GM10248 (cell line): ENCODE measurements at regions of chr11 and their contacts with region 1.

Region 1: DNA sequence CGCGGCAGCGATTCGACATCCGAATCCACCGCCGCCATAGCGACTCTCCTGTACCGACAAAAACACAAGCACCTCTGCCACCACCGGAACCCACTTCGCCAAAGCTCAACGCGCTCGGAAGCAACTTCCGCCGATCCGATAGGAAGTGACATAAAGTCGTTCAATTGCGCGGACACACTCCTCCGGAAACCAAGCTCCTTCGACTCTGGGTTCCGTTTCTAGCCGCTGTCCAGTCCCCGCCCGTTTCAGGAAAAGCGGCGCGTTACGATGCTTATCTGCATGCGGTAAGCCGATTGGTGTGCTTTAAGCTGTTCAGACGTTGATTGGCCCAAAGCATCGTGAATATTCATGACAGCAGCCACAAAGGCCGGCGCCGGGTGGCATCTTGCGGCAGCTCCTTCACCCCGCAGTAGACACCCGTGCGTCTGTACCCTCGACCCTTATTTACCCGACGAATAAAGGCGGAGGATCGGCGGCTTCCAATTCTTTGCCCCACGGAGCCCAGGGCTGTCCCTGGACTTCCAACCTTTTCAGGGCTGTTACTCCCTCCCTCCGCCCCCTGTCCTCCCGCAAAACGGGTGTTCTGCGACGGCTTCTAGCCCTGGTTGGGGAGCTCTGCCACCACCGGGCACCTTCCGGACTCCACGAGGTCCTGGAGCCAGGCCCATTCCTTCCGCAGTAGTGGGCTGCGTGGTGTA is at the start of gene TUT1:
- DNase-seq: peak; percentile 91
- CTCF ChIP-seq: no peak

Region 2: GRCh38 chr11:62556108-62556871 is 35.3 kb before region 1 on chr11:
- CTCF ChIA-PET with region 1: interaction called, 5 read pairs
- POLR2A ChIA-PET with region 1: interaction called, 15 read pairs
- DNase-seq: peak; percentile 70
- CTCF ChIP-seq: no peak

Region 3: DNA sequence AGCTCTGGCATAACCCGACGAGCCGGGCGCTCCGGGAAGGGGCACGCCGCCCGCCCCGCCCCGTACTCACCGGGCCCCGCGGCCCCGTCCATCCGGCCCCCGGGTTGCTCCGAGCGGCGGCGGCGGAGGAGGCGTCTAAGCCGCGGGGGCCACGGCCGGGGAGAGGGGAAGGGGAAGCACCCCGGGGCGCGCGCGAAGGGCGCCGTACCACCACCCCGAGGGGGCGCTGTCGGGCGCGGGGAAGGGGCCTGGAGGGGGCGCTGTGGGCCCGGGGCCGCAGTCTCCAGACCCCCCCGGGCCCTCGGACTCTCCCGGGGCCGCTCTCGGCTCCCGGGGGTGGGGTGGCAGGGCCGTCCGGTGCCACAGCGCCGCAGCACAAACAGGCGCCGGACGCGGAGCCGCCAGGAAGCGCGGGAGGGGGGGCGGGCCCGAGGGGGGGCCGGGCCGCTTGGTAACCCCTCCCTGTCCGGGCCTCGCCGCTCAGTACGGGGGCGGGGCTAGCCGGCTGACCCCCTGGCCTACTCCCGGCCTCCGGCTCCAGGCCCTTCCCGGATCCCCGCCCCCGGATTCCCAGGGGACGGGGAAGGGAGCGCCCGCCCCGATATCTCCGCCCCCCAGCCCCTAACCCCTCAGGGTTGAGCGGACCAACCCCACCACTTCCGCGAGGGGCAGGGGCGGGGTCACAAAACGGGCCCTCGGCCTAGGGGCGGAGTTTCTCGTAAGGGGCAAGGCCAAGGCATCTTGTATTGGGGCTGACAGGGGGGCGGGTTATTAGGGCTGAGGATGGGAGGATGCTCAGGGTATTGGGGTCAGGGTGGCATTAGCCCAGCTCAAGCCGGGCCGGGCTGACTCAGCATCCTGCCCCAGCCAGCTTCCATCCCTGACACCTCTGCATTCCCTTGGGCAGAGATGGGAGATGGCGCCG is 21.0 kb after region 1 on chr11 and contains the starts of genes EML3 and ROM1:
- CTCF ChIA-PET with region 1: interaction called, 50 read pairs
- POLR2A ChIA-PET with region 1: interaction called, 9 read pairs
- DNase-seq: peak; percentile 92
- CTCF ChIP-seq: peak; percentile 87

Region 4: DNA sequence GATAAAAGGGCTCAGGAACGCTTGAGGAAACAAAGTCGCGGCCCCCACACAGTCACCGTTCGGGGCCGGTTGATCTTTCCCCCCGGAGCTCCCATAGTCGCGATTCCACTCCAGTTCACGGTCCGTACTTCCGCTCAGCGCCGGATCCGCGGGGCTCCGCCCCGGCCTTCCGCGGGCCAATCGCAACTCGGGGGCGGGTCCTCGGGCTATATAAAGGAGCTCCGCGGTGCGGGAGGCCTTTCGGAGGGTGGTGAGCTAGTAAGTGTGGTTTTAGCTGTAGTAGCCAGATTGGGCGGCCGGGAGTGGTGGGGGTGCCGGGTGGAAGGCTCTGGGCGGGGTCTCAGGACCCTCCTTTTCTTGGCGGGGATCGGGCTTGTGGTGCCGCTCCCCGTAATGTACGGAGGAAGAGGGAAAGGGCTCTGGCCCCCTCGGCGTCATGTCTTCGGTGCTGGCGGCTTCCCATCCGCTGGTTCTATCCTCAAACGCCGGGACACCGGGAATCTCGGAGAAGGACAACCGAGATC is 73.5 kb after region 1 on chr11 and contains the starts of genes C11orf98 and CSKMT:
- CTCF ChIA-PET with region 1: no interaction called
- POLR2A ChIA-PET with region 1: interaction called, 50 read pairs
- DNase-seq: peak; percentile 96
- CTCF ChIP-seq: no peak

Region 5: DNA sequence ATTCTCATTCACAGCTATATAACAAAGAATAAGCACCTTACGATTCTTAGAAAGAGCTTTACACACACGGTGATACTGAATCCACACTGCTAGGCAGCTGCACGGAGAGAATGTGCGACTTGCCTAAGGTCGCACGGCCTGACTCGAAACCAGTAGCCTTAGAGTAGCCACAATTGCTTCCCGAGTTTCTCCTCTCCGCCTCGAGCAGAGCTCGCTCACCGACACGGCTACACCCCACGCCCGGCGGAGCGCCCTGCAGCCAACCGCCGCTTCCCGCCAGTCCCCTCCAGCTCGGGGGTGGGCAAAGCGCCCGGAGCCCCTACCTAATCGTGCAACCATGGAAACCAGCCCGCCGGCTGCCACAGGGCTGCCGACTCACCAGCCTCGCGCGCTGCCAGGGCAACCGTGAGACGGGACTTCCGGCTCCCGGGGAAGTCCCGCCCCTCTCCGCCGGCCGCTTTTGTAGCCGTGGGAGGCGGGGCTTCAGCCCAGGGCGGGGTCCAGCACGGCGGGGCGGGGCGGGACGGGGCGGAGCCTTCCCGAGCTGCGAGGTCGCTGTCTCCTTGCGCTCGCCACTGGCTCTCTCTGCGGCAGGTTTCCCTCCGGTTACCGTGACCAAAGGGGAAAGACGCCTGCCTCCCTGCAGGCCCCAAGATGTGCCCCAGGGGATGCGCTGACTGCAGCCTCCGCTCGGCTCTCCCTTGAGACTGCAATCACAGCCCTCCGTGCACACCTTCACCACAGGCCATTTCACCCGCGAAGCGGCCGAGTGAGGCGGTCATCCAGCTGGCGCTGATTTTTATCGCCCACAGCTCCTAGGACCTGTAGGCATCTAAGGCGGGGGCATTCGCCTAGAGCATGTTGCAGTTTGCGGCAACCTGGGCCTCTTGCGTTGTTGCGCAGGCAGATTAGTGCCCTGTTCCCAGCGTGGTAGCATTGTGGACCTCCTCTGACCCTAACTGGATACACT is 114.6 kb after region 1 on chr11:
- CTCF ChIA-PET with region 1: interaction called, 5 read pairs
- POLR2A ChIA-PET with region 1: interaction called, 14 read pairs
- DNase-seq: peak; percentile 96
- CTCF ChIP-seq: no peak

Region 6: GRCh38 chr11:62841361-62842184 is 250.0 kb after region 1 on chr11:
- CTCF ChIA-PET with region 1: no interaction called
- POLR2A ChIA-PET with region 1: interaction called, 14 read pairs
- DNase-seq: peak; percentile 92
- CTCF ChIP-seq: no peak